HEK293 (cell line): ENCODE measurements at regions of chr12 and their contacts with region 1.

Region 1: GRCh38 chr12:57583008-57583831 is 7.8 kb upstream of the PIP4K2C start:
- H3K4me3 ChIP-seq: no peak overlapping the region
- H3K27ac ChIP-seq: no peak overlapping the region
- H3K4me1 ChIP-seq: no peaks in the 10 kb centered on the region
- CTCF ChIP-seq: peak; percentile 94

Region 2: DNA sequence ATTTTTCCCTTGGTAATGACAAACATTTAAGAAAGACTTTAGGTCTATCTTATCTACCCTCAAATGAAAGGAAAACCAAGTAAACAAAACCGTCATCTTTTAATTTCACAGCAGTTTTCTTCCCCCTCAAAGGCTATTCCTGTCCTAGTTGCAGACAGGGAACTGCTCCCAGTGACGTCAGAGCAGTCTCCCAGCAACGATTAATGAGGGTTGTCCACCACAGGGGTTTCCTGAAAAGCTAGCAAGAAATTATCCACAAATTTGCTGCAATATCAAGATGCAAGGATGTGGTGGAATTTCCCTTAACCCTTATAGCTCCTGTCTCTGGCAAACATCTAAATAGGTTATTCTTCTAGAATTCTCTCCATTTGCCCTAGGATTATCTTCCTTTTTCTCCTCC is 243.1 kb before region 1 on chr12:
- CTCF ChIA-PET with region 1: no interaction called
- POLR2A ChIA-PET with region 1: no interaction called
- H3K4me3 ChIP-seq: no peak overlapping the region
- H3K27ac ChIP-seq: no peak overlapping the region
- H3K4me1 ChIP-seq: peaks cover 22% of the 10 kb centered on the region
- CTCF ChIP-seq: no peak

Region 3: DNA sequence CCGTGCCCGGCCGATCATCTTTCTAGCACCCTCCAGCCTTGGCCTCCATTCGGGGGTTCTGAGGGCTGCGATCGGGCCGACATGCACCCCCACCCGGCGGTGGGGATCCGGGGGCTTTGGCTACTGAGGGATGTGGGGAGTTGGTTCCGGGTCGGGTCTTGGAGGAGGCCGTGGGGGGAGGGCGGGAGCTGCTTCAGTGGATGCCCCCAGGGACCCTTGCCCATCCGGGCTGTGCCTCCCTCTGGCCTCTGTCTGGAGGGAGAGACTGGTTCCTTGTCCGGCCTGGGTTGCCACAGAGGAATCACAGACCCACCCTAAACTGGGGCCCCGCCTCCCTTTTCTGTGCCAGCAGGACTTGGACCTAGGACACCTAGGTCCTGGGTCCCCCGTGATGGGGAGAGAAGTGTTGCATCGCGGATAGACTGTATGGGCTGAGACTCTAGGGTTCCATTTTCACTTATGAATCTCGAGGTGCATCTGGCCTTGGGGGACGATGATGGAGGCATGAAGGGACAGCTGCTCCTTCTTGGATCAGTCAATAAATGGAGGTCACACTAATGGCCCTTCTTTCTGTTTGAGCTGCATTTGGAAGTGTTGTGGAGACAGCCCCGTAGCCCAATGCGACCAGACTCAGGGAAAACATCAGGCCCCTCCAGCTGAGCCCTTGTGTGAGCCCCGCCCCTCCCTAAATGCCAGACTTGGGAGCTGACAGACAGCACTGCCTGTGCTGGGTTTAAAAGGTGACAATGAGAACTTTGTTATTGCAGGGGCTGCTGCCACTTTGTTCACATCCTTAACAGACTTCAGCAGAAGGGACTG is 22.0 kb after region 1 on chr12:
- CTCF ChIA-PET with region 1: interaction called, 17 read pairs
- POLR2A ChIA-PET with region 1: no interaction called
- H3K4me3 ChIP-seq: peak overlapping the region; percentile 52
- H3K27ac ChIP-seq: peak overlapping the region; percentile 62; the same call in 1 of the 2 replicates
- H3K4me1 ChIP-seq: peaks cover 8% of the 10 kb centered on the region; the same call in 1 of the 2 replicates
- CTCF ChIP-seq: no peak

Region 4: GRCh38 chr12:57621497-57622292 is 38.5 kb after region 1 on chr12:
- CTCF ChIA-PET with region 1: interaction called, 113 read pairs
- POLR2A ChIA-PET with region 1: interaction called, 6 read pairs
- H3K4me3 ChIP-seq: peak overlapping the region; percentile 29
- H3K27ac ChIP-seq: no peak overlapping the region
- H3K4me1 ChIP-seq: no peaks in the 10 kb centered on the region
- CTCF ChIP-seq: peak; percentile 93

Region 5: DNA sequence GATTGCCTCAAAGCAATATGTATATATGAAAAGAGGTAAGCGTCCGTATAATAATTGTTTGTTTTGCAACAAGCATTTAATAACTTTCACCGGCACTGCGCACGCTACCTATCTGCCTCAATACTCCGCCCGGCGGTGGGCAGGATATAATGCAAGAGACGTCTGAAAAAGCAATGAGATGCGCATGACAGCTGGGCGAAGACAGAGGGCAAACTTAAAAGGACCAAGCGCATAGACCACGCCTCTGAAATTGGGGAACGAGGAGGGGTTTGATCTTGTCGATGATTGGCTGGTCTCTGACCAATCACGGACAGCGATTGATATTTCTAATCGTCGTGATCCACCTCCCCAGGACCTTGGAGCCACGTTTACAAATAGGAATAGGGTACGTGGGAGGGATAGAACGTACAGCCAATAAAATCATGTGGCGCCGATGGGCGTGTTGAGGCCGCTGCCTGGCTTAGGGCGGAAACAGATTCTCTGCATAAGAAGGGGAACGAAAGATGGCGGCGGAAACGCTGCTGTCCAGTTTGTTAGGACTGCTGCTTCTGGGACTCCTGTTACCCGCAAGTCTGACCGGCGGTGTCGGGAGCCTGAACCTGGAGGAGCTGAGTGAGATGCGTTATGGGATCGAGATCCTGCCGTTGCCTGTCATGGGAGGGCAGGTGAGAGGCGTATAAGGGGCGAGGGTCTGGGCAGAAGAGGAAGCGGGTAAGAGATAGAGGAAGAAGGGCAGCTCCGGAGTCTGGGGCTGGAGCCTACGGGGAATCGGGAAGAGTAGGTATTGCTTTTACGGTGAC is 110.6 kb after region 1 on chr12 and contains the start of gene OS9:
- CTCF ChIA-PET with region 1: interaction called, 10 read pairs
- POLR2A ChIA-PET with region 1: no interaction called
- H3K4me3 ChIP-seq: peak within 1 kb of the TSS; percentile 87
- H3K27ac ChIP-seq: no peak within 1 kb of the TSS; the same call in 1 of the 2 replicates
- H3K4me1 ChIP-seq: peaks cover 3% of the 10 kb centered on the region; the same call in 1 of the 2 replicates
- CTCF ChIP-seq: peak; percentile 60